Activated CD4-positive, alpha-beta T cell treated with anti-CD3 and anti-CD28 coated beads for 36 hours (primary cell): ENCODE measurements at regions of chr9 and their contacts with region 1.

Region 1: DNA sequence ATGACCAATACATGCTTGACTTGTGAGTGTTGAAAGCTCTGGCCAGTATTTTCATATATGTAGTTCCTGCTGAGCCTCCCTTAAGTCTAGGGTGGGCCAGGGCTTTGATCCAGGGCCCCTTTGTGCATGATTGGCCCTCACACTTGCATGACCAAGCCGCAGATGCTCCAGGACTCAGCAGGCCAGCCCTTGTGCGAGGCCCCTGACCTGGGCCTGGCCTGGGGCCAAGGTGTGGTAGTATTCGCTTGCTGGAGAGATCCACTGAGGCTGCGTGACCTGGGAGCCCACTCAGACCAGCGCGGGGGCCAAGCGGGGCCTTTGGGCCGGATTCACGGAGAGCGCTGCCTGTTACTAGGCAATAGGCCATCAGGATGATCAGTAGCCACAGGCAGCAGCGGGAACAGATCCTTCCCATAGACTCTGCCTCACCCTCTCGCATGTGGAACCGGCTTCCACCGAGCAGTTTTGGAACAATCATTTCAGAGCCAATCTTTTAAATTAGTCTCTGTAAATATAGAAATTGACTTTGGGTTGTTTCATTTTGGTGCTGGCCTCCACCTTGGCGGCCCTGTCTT is 79.0 kb upstream of the PTCH1 start:
- DNase-seq: no peak
- ATAC-seq: no peak
- H3K4me3 Mint-ChIP-seq: no peak overlapping the region
- H3K27ac Mint-ChIP-seq: no peak overlapping the region
- H3K4me1 Mint-ChIP-seq: no peaks in the 10 kb centered on the region
- H3K27me3 Mint-ChIP-seq: no peaks in the 10 kb centered on the region

Region 2: GRCh38 chr9:95605816-95606488 is 10.1 kb after region 1 on chr9:
- CTCF ChIA-PET with region 1: interaction called, 5 read pairs
- POLR2A ChIA-PET with region 1: no interaction called
- intact Hi-C with region 1: loop called in 1 of 2 experiments (anchors 1 kb)
- DNase-seq: no peak
- ATAC-seq: no peak
- H3K4me3 Mint-ChIP-seq: no peak overlapping the region
- H3K27ac Mint-ChIP-seq: no peak overlapping the region
- H3K4me1 Mint-ChIP-seq: no peaks in the 10 kb centered on the region
- H3K27me3 Mint-ChIP-seq: no peaks in the 10 kb centered on the region

Region 3: DNA sequence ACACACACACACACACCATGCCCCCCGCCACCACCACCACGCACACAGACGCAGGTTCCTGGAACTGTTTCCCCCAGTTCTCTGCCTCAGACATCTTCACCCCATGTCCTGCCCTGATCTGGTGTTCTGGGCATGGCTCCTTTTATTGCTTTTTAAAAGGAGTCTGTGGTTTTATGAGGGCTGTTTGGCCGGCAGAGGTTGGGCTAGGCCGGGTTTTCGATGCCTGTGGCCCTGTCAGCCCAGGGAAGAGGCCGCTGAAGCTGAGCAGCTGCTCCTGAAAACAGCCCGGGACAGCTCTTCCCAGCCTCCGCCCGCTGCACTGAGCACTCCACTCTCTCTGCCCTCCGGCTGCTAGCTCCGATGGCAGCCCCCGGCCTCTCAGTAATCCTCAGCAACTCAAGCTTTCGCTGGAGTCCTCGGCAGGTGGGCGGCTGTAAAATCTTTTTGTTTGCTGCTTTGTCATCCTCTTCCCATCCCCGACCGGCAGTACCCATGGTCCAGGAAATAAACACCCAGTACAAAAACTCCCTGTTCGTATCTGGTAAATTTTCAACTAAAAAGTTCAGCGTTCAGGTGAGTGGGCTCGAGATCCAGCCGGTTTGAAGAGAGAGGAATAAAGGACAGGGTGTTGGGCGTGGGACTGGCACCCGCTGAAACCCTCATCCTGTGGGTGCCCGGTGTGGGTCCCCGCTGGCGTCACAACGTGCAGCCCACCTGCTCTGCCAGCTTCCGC is 176.7 kb after region 1 on chr9:
- CTCF ChIA-PET with region 1: no interaction called
- POLR2A ChIA-PET with region 1: no interaction called
- intact Hi-C with region 1: no loop called
- DNase-seq: no peak
- ATAC-seq: no peak
- H3K4me3 Mint-ChIP-seq: no peak overlapping the region
- H3K27ac Mint-ChIP-seq: no peak overlapping the region
- H3K4me1 Mint-ChIP-seq: peaks cover 6% of the 10 kb centered on the region
- H3K27me3 Mint-ChIP-seq: peaks cover 27% of the 10 kb centered on the region